Spleen (tissue), 13 donors: ENCODE measurements at regions of chr7 and their contacts with region 1.

Region 1: DNA sequence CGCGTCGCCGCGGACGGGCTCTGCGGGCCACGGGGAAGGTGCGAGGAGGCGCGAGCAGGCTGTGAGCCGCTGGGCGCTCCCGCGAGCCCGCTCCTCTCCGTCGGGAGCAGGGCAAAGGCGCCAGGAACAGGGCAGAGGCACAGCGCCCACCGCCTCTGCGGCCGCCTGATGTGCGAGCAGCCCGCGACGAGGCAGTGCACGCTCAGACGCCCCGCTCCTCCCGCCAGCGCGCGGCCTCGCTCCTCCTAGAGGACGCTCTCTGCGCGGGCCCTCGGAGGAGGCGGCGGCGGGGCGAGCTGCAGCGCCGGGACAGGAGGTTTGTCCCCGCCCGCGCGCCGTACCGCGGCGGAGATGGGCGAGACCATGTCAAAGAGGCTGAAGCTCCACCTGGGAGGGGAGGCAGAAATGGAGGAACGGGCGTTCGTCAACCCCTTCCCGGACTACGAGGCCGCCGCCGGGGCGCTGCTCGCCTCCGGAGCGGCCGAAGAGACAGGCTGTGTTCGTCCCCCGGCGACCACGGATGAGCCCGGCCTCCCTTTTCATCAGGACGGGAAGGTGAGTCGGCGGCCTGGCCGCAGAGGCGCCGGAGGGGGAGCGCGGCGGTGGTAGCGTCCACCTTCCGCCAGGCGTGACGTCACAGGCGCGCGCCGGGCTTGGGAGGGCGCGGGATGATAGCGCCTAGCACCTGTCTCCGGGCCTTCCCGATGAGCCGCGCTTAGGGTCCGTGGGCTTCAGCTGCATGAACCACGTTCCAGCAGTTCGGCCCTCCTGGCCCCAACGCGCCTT is 731 bp downstream of the LANCL2 start:
- DNase-seq: peak; percentile 99
- H3K4me3 ChIP-seq: peak overlapping the region; percentile 85 to 97 (median 96)
- H3K27ac ChIP-seq: peak overlapping the region; percentile 95 to 100 (median 98)
- H3K4me1 ChIP-seq: peaks cover 10 to 28% (median 18%) of the 10 kb centered on the region in 6 donors
- H3K27me3 ChIP-seq: no peaks in the 10 kb centered on the region
- CTCF ChIP-seq: peak in 10 of 11 experiments; percentile 24 to 71 (median 52)
- POLR2A ChIP-seq: peak in 2 of 3 donors; percentile 76 to 86

Region 2: GRCh38 chr7:54758702-54759592 is 606.9 kb before region 1 on chr7 and contains the start of gene SEC61G:
- intact Hi-C with region 1: loop called (anchors 10 kb)
- DNase-seq: peak; percentile 97
- H3K4me3 ChIP-seq: peak within 1 kb of the TSS; percentile 84 to 99 (median 96)
- H3K27ac ChIP-seq: peak within 1 kb of the TSS; percentile 81 to 92 (median 91)
- H3K4me1 ChIP-seq: peaks cover 14 to 55% (median 33%) of the 10 kb centered on the region in 6 donors
- H3K27me3 ChIP-seq: no peaks in the 10 kb centered on the region
- CTCF ChIP-seq: peak in 1 of 11 experiments; percentile 6
- POLR2A ChIP-seq: peak in 2 of 3 donors; percentile 36 to 51
- total RNA-seq, gene SEC61G: 52.8 to 290 (median 77.1) TPM

Region 3: GRCh38 chr7:55538538-55538937 is 172.7 kb after region 1 on chr7:
- intact Hi-C with region 1: no loop called
- DNase-seq: no peak
- H3K4me3 ChIP-seq: peak overlapping the region in 1 of 8 donors; percentile 56
- H3K27ac ChIP-seq: peak overlapping the region in 5 of 8 donors; percentile 82 to 95 (median 90)
- H3K4me1 ChIP-seq: peaks cover 31 to 82% (median 56%) of the 10 kb centered on the region in 6 donors
- H3K27me3 ChIP-seq: no peaks in the 10 kb centered on the region
- CTCF ChIP-seq: no peak
- POLR2A ChIP-seq: no peak

Region 4: GRCh38 chr7:56092789-56093531 is 727.1 kb after region 1 on chr7 and contains the start of gene PHKG1:
- intact Hi-C with region 1: no loop called
- DNase-seq: peak; percentile 80
- H3K4me3 ChIP-seq: no peak within 1 kb of the TSS
- H3K27ac ChIP-seq: peak within 1 kb of the TSS in 5 of 8 donors; percentile 13 to 51 (median 43)
- H3K4me1 ChIP-seq: peaks cover 3 to 18% (median 10%) of the 10 kb centered on the region in 6 donors
- H3K27me3 ChIP-seq: no peaks in the 10 kb centered on the region
- CTCF ChIP-seq: peak in 7 of 11 experiments; percentile 18 to 62 (median 52)
- POLR2A ChIP-seq: no peak
- total RNA-seq, gene PHKG1: 1.0 to 3.4 (median 1.8) TPM in 6 of 7 donors, not detected in the other